Activated CD4-positive, alpha-beta T cell treated with anti-CD3 and anti-CD28 coated beads for 36 hours (primary cell): ENCODE measurements at regions of chr4 and their contacts with region 1.

Region 1: DNA sequence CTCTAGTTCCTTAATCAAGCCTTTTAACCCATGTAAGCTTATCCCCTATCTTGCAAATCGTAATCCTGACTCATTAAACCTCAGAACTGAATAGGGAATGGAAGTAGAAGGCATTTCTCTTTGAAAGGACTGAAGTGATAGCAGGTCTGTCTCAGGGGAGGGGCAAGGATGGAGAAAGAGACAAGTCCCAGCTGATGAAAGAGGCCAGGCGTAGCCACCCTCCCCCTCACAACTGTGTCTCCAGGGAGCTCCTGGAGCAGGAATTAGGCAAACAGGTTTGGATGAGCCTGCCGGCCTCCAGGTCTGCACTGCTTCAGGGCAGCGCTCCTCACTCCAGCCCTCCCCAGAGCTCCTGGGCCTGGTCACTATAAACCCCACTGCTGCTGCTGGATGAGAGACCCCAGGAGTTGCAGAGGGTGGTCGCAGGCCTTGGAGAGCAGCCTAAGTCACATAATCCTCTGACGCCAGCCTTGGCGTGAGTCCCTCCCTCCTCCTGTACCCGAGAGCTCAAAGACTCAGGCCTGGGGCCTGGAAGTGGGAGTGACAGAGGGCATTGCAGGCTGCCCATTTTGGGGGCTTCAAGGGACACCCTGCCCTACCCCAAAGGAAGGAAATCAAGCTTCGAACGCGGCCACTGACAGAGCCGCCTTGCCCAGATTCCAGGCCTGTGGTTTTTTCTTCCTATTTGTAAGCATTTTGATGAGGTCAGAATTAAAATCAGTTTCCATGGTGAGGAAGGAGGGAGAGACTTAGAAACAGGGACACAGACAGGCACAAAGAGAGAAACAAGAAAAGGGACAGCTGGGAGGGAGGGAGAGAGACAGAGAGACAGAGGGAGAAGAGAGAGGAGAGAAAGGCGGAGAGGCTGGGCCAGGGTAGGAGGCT is 21.2 kb upstream of the MSX1 start:
- DNase-seq: no peak
- ATAC-seq: no peak
- H3K4me3 Mint-ChIP-seq: no peak overlapping the region
- H3K27ac Mint-ChIP-seq: no peak overlapping the region
- H3K4me1 Mint-ChIP-seq: no peaks in the 10 kb centered on the region
- H3K27me3 Mint-ChIP-seq: peaks cover 20% of the 10 kb centered on the region

Region 2: GRCh38 chr4:4651811-4652755 is 186.2 kb before region 1 on chr4:
- CTCF ChIA-PET with region 1: no interaction called
- POLR2A ChIA-PET with region 1: interaction called, 13 read pairs
- intact Hi-C with region 1: no loop called
- DNase-seq: no peak
- ATAC-seq: no peak
- H3K4me3 Mint-ChIP-seq: no peak overlapping the region
- H3K27ac Mint-ChIP-seq: no peak overlapping the region
- H3K4me1 Mint-ChIP-seq: no peaks in the 10 kb centered on the region
- H3K27me3 Mint-ChIP-seq: no peaks in the 10 kb centered on the region

Region 3: DNA sequence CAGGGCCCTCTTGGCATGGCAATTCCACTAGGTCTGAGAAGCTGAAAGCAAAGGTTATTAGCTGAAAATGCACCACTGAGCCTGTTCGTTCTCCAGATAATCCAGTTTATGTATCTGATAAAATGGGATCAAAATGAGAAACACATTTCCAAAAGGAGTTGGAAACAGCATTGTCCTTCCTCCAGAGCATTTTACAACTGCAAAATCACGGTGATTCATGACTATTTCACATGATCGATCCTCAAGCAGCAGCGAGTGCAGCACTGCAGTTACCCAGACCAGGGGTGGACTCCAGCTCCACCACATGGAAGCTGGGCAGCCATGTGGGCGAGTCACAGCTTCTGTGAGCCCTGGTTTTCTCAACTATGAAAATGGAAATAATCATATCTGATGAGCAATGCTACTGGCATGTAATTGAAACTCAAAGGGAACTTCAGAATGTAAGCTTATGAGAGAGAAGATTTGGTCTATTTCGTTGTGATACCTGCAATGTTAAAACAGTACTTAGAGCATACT is 57.5 kb before region 1 on chr4:
- CTCF ChIA-PET with region 1: no interaction called
- POLR2A ChIA-PET with region 1: no interaction called
- intact Hi-C with region 1: no loop called
- DNase-seq: no peak
- ATAC-seq: no peak
- H3K4me3 Mint-ChIP-seq: no peak overlapping the region
- H3K27ac Mint-ChIP-seq: no peak overlapping the region
- H3K4me1 Mint-ChIP-seq: no peaks in the 10 kb centered on the region
- H3K27me3 Mint-ChIP-seq: peaks cover 2% of the 10 kb centered on the region

Region 4: GRCh38 chr4:5084911-5085475 is 246.7 kb after region 1 on chr4:
- CTCF ChIA-PET with region 1: no interaction called
- POLR2A ChIA-PET with region 1: no interaction called
- intact Hi-C with region 1: no loop called
- DNase-seq: no peak
- ATAC-seq: no peak
- H3K4me3 Mint-ChIP-seq: no peak overlapping the region
- H3K27ac Mint-ChIP-seq: no peak overlapping the region
- H3K4me1 Mint-ChIP-seq: no peaks in the 10 kb centered on the region
- H3K27me3 Mint-ChIP-seq: peaks cover 9% of the 10 kb centered on the region